ENCODE measurements at regions of chr15 and their contacts with region 1.

Region 1: GRCh38 chr15:74540761-74541493 is at the start of gene ARID3B:
- DNase-seq: peak; percentile 88
- ATAC-seq: peak; percentile 92
- H3K4me3 Mint-ChIP-seq: peak within 1 kb of the TSS; percentile 94
- H3K27ac Mint-ChIP-seq: peak within 1 kb of the TSS; percentile 97
- H3K4me1 Mint-ChIP-seq: peaks cover 42% of the 10 kb centered on the region
- H3K27me3 Mint-ChIP-seq: no peaks in the 10 kb centered on the region
- total RNA-seq, gene ARID3B: 39.4 to 43.0 TPM

Region 2: DNA sequence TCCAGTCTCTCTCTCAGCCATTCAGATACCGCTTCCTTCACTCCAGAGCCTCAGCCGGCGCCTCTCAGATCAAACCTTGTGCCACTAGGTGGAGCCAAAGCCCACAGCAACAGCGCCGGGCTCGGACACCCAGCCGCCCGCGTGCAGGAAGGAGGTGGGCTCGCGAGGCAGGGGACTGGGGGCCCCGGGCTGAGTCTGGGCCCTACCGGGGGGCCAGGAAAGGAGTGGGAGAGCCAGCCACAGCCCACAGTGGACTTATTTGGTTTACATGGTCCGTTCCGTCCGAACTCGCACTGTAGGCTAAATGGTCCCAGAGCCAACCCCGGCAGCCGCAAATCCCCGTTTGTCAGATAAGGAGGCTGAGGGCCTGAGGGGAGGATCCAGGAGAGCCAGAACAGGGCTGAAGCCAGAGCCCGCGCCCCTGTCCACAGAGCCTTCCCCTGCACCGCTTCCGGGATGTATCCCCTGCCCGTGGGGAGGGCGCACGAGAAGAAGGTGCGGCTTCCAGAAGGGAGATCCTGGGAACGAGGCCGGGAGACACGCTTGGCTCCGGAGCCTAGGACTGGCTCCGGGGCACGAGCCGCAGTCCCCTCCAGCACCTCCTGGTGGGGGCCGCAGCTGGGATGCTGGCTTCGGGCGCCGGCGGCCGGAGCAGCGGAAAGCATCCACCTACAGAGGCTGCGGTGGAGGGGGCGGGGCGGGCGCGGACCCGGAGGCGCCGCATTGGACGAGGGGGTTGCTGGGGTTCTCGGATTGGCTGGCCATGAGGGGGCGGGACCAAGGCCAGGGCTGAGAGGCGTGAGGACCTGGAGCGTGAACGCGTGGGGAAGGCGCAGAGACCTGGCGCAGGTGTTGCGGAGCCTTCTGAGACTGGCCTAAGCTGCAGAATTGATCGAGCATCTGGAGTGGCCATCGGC is 166.9 kb before region 1 on chr15:
- POLR2A ChIA-PET with region 1: interaction called, 12 read pairs
- DNase-seq: peak; percentile 93
- ATAC-seq: peak; percentile 94
- H3K4me3 Mint-ChIP-seq: peak overlapping the region; percentile 82
- H3K27ac Mint-ChIP-seq: peak overlapping the region; percentile 83
- H3K4me1 Mint-ChIP-seq: peaks cover 24% of the 10 kb centered on the region
- H3K27me3 Mint-ChIP-seq: peaks cover 19% of the 10 kb centered on the region

Region 3: GRCh38 chr15:74573987-74574386 is 33.1 kb after region 1 on chr15:
- POLR2A ChIA-PET with region 1: no interaction called
- DNase-seq: no peak
- ATAC-seq: peak; percentile 60
- H3K4me3 Mint-ChIP-seq: no peak overlapping the region
- H3K27ac Mint-ChIP-seq: peak overlapping the region; percentile 44
- H3K4me1 Mint-ChIP-seq: peaks cover 12% of the 10 kb centered on the region
- H3K27me3 Mint-ChIP-seq: no peaks in the 10 kb centered on the region

Region 4: DNA sequence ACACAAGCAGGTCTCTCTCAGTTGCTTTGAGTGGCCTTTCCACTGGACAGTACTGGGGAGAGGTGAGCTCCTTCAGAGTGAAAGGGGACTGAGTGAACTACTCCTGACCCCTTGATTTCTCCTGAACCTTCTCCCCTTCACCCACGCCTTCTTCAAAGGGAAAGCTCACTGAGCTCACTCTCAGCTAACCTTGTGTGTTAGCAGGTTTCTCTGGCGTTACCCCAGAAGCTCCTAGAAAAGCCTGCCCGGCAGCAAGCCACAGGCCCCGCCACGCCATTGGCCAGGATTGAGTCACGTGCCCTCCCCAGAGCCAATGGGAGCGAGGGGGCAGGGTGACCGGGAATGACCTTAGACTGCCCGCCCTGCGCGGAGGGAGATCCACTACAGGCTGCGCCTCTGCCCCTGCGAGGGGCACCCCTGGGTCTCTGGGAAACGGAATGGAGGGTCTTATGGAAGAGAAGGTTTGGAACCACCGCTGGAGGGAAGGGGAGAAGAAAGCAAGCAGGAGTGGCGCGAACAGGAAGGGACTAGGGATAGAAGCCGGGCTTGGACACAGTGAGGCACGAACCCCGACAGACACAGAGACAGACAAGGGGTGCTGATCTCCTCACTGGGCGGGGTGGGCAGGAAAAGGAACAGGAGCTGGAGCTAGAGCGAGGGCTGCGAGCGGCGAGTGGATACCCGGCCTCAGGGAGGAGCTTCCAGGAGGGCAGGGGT is 57.4 kb after region 1 on chr15:
- POLR2A ChIA-PET with region 1: interaction called, 20 read pairs
- DNase-seq: peak; percentile 90
- ATAC-seq: peak; percentile 96
- H3K4me3 Mint-ChIP-seq: peak overlapping the region; percentile 96
- H3K27ac Mint-ChIP-seq: peak overlapping the region; percentile 95
- H3K4me1 Mint-ChIP-seq: peaks cover 14% of the 10 kb centered on the region
- H3K27me3 Mint-ChIP-seq: no peaks in the 10 kb centered on the region

Region 5: DNA sequence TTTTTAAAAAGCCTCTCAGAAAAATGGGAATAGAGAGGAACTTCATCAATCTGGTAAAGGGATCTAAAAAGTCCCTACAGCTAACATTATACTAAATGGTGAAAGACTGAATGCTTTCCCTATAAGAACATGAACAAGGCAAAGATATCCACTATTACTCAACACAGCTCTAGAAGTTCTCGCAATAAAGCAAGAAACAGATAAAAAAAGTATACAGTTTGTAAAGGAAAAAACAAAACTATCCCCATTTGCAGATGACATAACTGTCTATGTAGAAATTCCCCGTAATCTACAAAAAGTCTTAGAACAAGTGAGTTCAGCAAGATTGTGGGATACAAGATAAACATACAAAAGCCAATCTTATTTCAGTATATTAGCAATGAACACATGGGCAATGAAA is 139.5 kb after region 1 on chr15:
- POLR2A ChIA-PET with region 1: no interaction called
- DNase-seq: no peak
- ATAC-seq: no peak
- H3K4me3 Mint-ChIP-seq: no peak overlapping the region
- H3K27ac Mint-ChIP-seq: no peak overlapping the region
- H3K4me1 Mint-ChIP-seq: peaks cover 5% of the 10 kb centered on the region
- H3K27me3 Mint-ChIP-seq: no peaks in the 10 kb centered on the region

Region 6: GRCh38 chr15:74752491-74753020 is 211.6 kb after region 1 on chr15:
- POLR2A ChIA-PET with region 1: no interaction called
- DNase-seq: no peak
- ATAC-seq: no peak
- H3K4me3 Mint-ChIP-seq: no peak overlapping the region
- H3K27ac Mint-ChIP-seq: no peak overlapping the region
- H3K4me1 Mint-ChIP-seq: no peaks in the 10 kb centered on the region
- H3K27me3 Mint-ChIP-seq: peaks cover 6% of the 10 kb centered on the region